Left ventricle myocardium superior (tissue), 1 donor: ENCODE measurements at regions of chr6 and their contacts with region 1.

Region 1: GRCh38 chr6:161101517-161101916 is 109.9 kb downstream of the MAP3K4 start:
- DNase-seq: no peak
- ATAC-seq: no peak

Region 2: DNA sequence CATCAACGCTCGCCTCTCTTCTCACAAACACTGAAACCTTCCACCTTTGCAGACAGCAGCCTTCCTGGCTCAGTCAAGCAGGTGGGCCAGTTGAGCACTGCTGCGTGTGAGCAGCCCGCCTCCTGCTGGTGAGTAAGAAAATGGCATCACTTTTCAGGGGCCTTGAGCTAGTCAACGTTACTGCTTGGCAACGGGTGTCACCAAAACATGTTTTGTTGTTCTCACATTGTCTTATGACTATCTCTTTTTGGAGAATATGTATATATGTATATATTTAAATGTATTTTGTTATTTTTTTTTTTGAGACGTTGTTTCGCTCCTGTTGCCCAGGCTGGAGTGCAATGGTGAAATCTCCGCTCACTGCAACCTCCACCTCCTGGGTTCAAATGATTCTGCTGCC is 269.4 kb after region 1 on chr6:
- intact Hi-C with region 1: loop called (anchors 10 kb)
- DNase-seq: peak; percentile 57
- ATAC-seq: peak; percentile 67